IMR-90 (cell line): ENCODE measurements at regions of chr16 and their contacts with region 1.

Region 1: DNA sequence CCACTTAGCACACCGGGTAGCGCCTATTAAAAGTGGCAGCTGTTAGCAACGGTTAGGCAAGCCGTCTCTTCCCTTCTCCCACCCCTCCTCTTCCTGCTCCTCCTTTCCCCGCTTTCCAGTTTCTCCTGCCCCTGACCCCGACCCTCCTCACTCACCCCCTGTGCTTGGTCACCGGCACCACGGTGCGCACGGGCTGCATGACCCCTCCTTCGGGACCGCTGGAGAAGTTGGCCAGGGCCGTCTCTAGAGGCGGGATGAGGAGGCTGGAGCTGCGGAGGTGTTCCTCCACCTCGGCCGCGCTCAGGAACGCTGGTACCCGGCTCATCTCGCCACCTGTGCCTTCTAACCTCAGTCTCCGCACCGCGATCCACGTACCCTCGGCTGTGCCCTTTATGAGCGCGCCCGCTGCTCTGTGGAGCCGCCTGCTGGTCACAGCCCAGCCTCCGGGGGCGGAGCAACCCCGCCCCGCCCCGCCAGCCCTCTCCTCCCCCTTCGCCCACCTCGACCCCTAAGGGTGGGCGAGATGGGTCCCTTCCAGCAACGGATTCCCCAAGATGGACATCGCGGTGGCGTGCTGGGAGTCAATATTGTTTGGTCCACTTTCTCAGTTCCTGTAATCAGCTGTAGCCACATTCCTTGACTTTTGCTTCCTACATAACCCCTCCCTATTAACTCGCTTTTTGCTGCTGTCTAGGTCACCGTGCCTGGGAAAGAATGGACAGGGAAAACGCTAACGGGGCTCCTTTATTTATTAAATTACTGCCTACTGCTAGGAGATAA is at the start of gene CRYM:
- DNase-seq: no peak
- ATAC-seq: peak; percentile 97
- H3K4me3 ChIP-seq: peak within 1 kb of the TSS; percentile 35
- H3K27ac ChIP-seq: no peak within 1 kb of the TSS
- H3K4me1 ChIP-seq: no peaks in the 10 kb centered on the region
- H3K27me3 ChIP-seq: peaks cover 71% of the 10 kb centered on the region
- CTCF ChIP-seq: peak; percentile 61
- POLR2A ChIP-seq: no peak
- RAD21 ChIP-seq: peak; percentile 55
- total RNA-seq, gene CRYM: not detected in 2 replicates

Region 2: DNA sequence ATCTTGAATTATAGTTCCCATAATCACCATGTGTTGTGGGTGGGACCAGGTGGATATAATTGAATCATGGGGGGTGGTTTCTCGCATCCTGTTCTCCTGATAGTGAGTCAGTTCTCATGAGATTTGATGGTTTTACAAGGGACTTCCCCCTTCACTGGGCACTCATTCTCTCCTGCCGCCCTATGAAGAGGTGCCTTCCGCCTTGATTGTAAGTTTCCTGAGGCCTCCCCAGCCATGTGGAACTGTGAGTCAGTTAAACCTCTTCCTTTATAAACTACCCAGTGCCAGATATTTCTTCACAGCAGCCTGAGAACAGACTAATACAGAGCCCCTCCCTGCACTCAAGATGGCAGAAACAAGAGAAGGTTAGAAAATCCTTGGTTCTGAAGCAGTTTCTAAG is 93.3 kb before region 1 on chr16:
- CTCF ChIA-PET with region 1: interaction called, 5 read pairs
- POLR2A ChIA-PET with region 1: no interaction called
- dilution Hi-C with region 1: no loop called
- in situ Hi-C with region 1: no loop called
- intact Hi-C with region 1: loop called (anchors 1 kb)
- DNase-seq: no peak
- ATAC-seq: no peak
- H3K4me3 ChIP-seq: no peak overlapping the region
- H3K27ac ChIP-seq: no peak overlapping the region
- H3K4me1 ChIP-seq: peaks cover 6% of the 10 kb centered on the region
- H3K27me3 ChIP-seq: no peaks in the 10 kb centered on the region
- CTCF ChIP-seq: no peak
- POLR2A ChIP-seq: no peak
- RAD21 ChIP-seq: no peak

Region 3: DNA sequence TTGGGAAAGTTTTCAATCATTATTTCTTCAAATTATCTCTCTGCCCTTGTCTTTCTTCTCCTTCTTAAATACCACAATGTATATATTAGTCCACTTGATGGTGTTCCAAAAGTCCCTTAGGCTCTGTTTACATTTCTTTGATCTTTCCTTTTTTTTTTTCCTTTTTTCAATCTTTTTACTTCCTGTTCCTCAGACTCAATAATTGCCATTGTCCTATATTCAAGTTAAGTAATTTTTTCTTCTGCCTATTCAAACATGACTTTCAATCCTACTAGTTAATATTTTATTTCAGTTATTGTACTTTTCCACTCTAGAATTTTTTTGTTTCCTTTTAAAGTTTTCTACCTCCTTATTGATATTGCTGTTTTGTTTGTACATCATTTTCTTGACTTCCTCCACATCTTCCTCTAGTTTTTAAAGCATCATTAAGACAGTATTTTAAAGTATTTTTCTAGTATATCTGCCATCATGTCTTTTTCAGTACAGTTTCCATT is 659.3 kb after region 1 on chr16:
- CTCF ChIA-PET with region 1: no interaction called
- POLR2A ChIA-PET with region 1: no interaction called
- dilution Hi-C with region 1: no loop called
- in situ Hi-C with region 1: no loop called
- intact Hi-C with region 1: no loop called
- DNase-seq: no peak
- ATAC-seq: no peak
- H3K4me3 ChIP-seq: no peak overlapping the region
- H3K27ac ChIP-seq: no peak overlapping the region
- H3K4me1 ChIP-seq: no peaks in the 10 kb centered on the region
- H3K27me3 ChIP-seq: no peaks in the 10 kb centered on the region; the same call in none of the 2 replicates
- CTCF ChIP-seq: no peak
- POLR2A ChIP-seq: no peak
- RAD21 ChIP-seq: no peak